Posterior vena cava (tissue), 2 donors: ENCODE measurements at regions of chr18 and their contacts with region 1.

Region 1: DNA sequence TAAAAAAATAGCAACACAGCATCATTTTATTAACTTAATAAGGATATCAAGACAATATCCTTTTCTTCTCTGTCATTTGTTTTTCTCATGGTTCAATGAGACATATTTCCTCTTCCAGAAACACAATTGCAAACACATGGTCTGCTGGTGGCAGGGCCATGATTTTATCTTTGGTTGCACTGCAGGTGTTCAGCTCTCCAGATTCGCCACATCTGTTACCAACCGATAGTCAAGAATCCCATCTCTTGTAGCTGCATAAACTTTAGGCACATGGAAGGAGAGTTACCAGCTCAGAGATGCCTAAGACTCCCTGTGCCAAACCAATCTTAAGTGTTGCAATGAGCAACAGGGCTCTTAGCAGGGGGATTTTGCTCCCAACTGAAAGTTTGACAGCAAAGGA is 1303.2 kb upstream of the CELF4 start:
- DNase-seq: no peak

Region 2: GRCh38 chr18:38718365-38718901 is 150.3 kb before region 1 on chr18:
- intact Hi-C with region 1: loop called in 1 of 2 experiments (anchors 5 kb)
- DNase-seq: no peak

Region 3: DNA sequence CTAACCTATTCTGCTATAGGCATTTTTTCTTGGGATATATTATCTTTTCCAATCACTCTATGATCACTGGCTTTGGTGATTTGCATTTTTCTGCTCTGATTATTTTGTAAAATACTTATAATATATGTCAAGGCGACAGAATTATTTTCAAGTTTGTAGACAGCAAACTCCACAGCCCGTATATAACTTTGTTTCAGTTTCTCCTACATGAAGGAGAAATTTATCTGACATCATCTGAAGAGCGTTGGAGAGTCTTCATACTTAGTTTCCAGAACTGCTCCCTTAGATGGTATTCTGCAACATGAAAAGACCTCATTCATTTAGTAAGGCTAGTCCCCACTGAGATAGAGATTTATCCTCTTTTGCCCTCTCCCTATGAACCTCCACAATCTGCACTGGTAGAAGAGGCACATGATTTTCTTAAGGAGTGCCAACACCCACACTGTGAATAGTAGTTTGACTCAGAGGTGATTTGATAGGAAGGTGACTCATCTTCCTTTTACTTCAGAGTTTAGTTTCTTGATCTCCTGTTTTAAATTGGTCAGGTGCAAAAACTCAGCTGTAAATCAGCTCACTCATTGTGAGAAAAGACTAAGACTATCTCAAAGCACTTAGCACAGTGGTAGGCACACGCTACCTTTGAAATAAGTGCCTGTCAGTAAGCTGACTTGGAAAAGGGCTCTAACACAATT is 545.4 kb after region 1 on chr18:
- intact Hi-C with region 1: no loop called
- DNase-seq: no peak